Ascending aorta (tissue), 2 donors: ENCODE measurements at regions of chr2 and their contacts with region 1.

Region 1: DNA sequence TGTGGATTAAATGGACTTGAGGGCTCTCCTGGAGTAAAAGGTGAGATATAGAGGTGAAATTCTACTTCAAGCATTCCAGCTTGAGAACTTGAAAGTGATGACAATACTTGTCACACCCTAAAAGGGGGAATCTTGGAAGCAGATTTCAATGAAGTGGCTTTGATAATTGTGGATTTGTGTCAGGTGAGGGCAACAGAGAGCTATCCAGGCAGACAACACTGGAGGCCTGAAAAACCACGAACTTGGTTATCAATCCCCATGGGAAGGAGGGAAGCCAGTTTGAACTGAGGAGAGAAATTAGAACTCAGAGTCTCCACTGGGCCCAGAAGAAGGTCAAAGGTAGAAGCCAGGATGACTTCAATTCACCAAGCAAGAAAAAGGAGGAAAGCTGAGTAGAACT is 263.9 kb downstream of the FIGN start:
- DNase-seq: no peak
- H3K4me3 ChIP-seq: no peak overlapping the region
- H3K27ac ChIP-seq: no peak overlapping the region
- H3K4me1 ChIP-seq: no peaks in the 10 kb centered on the region
- H3K27me3 ChIP-seq: no peaks in the 10 kb centered on the region
- CTCF ChIP-seq: peak in 1 of 3 experiments; percentile 30

Region 2: GRCh38 chr2:163551616-163552373 is 79.8 kb after region 1 on chr2:
- intact Hi-C with region 1: no loop called
- DNase-seq: no peak
- H3K4me3 ChIP-seq: no peak overlapping the region
- H3K27ac ChIP-seq: no peak overlapping the region
- H3K4me1 ChIP-seq: no peaks in the 10 kb centered on the region
- H3K27me3 ChIP-seq: no peaks in the 10 kb centered on the region
- CTCF ChIP-seq: no peak

Region 3: GRCh38 chr2:163573651-163574050 is 101.7 kb after region 1 on chr2:
- intact Hi-C with region 1: no loop called
- DNase-seq: no peak
- H3K4me3 ChIP-seq: no peak overlapping the region
- H3K27ac ChIP-seq: no peak overlapping the region
- H3K4me1 ChIP-seq: no peaks in the 10 kb centered on the region
- H3K27me3 ChIP-seq: no peaks in the 10 kb centered on the region
- CTCF ChIP-seq: no peak

Region 4: DNA sequence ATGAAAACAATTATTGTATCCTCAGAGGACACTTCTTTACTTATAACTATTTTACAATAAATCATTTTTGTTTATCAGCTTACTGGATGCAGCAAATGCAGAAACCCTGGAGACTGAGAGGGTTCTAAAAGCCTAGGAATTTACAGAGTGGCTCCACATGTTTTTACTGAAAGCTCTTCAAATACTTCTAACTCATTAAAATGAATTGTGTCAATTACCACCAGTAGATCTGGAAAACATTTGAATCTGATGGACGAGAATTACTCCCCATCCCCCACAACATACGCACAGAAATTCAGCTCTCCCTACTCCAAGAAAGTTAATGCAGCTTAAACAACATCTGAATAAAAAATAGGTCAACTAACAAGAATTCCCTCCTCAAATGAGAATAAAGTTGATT is 583.7 kb after region 1 on chr2:
- intact Hi-C with region 1: loop called (anchors 10 kb)
- DNase-seq: no peak
- H3K4me3 ChIP-seq: no peak overlapping the region
- H3K27ac ChIP-seq: peak overlapping the region in 1 of 2 donors; percentile 31
- H3K4me1 ChIP-seq: peaks cover 6 to 15% of the 10 kb centered on the region in 2 donors
- H3K27me3 ChIP-seq: no peaks in the 10 kb centered on the region
- CTCF ChIP-seq: no peak